ENCODE measurements at regions of chr2 and their contacts with region 1.

Region 1: DNA sequence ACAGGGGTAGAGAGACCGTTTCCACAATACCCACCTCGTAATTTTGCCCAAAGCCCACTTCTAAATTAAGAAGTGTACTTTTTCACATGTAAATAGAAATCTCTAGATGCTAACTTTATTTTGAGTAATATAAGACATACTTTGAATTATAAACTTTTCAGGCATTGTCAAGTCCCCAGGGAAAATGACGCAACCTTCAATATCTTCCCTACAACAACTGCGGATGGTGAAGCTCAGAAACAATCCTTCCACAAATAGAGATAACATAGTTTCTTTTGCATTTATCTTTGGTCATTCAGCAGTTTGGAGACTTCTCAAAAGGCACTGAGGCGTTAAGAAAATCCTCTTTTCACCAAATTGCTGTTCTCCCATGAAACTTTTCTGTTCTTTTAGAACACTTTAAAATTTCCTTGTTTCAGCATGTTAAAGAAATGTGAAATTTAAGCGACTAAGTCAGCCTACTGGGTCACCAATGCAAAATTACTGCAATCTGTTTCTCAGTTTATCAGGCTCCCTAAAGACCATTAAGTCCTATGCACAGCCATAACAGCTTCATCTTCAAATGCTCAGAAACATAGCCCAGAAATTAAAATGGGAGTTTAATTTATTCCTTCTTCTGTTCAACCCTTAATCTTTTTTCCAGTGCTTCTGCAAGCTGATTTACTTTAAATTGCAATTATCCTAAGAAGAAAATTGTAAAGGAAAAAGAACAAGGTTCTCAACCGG is 118.3 kb upstream of the DNAJC10 start:
- DNase-seq: no peak
- H3K4me3 ChIP-seq: no peak overlapping the region
- H3K27ac ChIP-seq: no peak overlapping the region
- H3K4me1 ChIP-seq: no peaks in the 10 kb centered on the region
- H3K27me3 ChIP-seq: no peaks in the 10 kb centered on the region
- CTCF ChIP-seq: no peak
- EP300 ChIP-seq: no peak
- POLR2A ChIP-seq: no peak

Region 2: DNA sequence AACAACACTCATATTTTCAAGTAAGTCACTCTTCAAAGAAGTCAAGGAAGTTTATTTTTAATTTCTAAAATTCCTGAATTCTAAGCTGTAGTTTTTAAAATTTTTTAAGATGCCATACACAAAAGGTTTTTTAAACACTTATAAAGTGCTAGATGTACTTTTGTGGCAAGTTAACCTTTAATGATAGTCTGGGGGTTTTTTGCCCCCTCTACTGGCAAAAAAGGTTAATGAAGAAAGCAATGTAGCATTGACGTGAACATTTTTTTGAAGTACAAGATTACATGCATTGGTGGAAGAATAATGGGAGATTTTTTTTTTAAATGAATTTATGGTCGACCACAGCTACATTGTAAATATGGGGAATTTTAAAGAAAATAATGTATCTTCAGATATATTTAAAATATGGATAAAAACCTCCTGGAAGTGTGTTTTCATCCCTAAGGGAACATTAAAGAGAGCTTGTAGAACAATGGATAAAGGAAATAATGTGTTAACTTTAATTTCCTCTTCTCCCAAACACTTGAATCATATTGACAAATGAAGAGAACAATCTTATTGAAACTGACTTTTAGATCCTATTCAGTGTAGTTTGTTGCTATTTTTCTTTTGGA is 693.6 kb before region 1 on chr2:
- in situ Hi-C with region 1: no loop called
- intact Hi-C with region 1: loop called (anchors 5 kb)
- DNase-seq: no peak
- H3K4me3 ChIP-seq: no peak overlapping the region
- H3K27ac ChIP-seq: no peak overlapping the region
- H3K4me1 ChIP-seq: peaks cover 3 to 77% (median 32%) of the 10 kb centered on the region in 4 donors
- H3K27me3 ChIP-seq: no peaks in the 10 kb centered on the region
- CTCF ChIP-seq: peak; percentile 41 to 50 (median 46)
- EP300 ChIP-seq: no peak
- POLR2A ChIP-seq: no peak

Region 3: DNA sequence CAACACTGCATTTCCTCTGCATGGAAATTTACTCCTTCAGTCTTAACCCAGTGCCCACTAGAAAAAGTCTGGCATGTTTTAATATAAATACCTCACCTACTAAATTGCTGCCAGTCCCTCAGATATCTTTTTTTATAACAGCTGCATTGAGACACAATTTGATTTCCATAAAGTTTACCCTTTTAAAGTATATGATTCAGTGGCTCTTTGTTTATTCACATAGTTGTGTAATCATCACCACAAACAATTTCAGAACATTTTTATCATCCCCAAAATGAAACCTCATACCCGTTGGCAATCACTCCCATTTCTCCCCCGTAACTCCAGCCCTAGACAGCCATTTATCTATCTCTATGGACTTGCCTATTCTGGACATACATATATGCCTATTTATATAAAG is 285.7 kb after region 1 on chr2:
- in situ Hi-C with region 1: no loop called
- intact Hi-C with region 1: no loop called
- DNase-seq: no peak
- H3K4me3 ChIP-seq: no peak overlapping the region
- H3K27ac ChIP-seq: no peak overlapping the region
- H3K4me1 ChIP-seq: peaks cover 0 to 2% (median 0%) of the 10 kb centered on the region in 4 donors
- H3K27me3 ChIP-seq: no peaks in the 10 kb centered on the region
- CTCF ChIP-seq: no peak
- EP300 ChIP-seq: no peak
- POLR2A ChIP-seq: no peak

Measured in transverse colon (tissue), 4 donors.